ENCODE measurements at regions of chr12 and their contacts with region 1.

Region 1: GRCh38 chr12:57111031-57111734 is at the start of gene STAT6:
- DNase-seq: peak; percentile 92
- ATAC-seq: peak; percentile 60
- H3K4me3 ChIP-seq: peak within 1 kb of the TSS; percentile 87 to 100 (median 100)
- H3K4me3 Mint-ChIP-seq: peak within 1 kb of the TSS; percentile 99
- H3K27ac ChIP-seq: peak within 1 kb of the TSS; percentile 96 to 100
- H3K27ac Mint-ChIP-seq: peak within 1 kb of the TSS; percentile 98
- H3K4me1 ChIP-seq: peaks cover 20 to 40% of the 10 kb centered on the region in 2 donors
- H3K4me1 Mint-ChIP-seq: peaks cover 43% of the 10 kb centered on the region
- H3K27me3 ChIP-seq: no peaks in the 10 kb centered on the region
- H3K27me3 Mint-ChIP-seq: no peaks in the 10 kb centered on the region
- CTCF ChIP-seq: no peak
- total RNA-seq, gene STAT6: 704 and 736 TPM in 2 replicates

Region 2: DNA sequence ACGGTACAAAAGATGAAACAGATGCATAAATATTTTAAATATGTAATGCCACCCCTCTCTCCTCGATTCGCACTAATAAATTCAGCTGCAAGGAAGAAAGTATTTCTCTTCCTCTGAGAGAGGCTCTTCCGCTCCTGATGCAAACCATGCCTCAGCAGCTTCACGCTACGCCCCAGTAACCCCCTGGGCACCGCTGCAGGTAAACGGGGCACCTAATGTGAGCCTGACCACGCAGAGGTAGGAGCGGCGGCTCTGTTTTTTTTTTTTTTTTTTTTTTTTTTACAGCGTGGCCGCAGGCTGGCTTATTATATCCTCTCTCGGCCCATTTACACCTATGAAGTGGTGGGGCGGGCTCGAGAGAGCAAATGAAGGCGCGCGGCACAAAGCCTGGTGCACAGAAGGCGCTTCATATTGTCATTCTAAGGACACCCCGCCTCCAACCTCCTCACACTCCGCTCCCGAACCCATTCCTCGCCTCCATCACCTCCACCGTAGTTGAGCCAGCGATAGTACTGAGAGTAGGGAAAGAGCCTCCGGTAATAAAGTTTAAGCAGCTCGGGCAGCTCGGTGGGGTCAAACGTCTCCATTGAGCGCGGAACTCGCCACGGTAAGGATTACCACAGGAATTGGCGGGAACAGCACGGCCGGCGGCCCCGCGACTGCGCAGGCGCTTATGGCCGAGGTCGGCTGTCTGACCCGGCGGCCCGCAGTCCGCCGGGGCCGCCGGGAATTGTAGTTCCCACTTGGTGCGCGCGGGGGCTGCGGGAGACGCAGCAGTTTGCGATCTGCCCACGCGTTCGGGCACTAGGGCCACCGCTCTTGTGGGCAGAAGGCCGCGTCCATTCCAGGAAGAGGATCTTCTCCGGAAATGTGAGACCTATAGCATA is 359.2 kb before region 1 on chr12 and contains the start of gene PRIM1:
- CTCF ChIA-PET with region 1: interaction called, 38 read pairs
- POLR2A ChIA-PET with region 1: interaction called, 3 read pairs
- intact Hi-C with region 1: loop called (anchors 1 kb)
- DNase-seq: peak; percentile 88
- ATAC-seq: peak; percentile 82
- H3K4me3 ChIP-seq: peak within 1 kb of the TSS; percentile 90 to 100 (median 97)
- H3K4me3 Mint-ChIP-seq: peak within 1 kb of the TSS; percentile 97
- H3K27ac ChIP-seq: peak within 1 kb of the TSS; percentile 79 to 80
- H3K27ac Mint-ChIP-seq: peak within 1 kb of the TSS; percentile 96
- H3K4me1 ChIP-seq: peaks cover 38% of the 10 kb centered on the region in 2 donors
- H3K4me1 Mint-ChIP-seq: peaks cover 44% of the 10 kb centered on the region
- H3K27me3 ChIP-seq: no peaks in the 10 kb centered on the region
- H3K27me3 Mint-ChIP-seq: no peaks in the 10 kb centered on the region
- CTCF ChIP-seq: peak; percentile 21
- total RNA-seq, gene PRIM1: 25.2 and 25.4 TPM in 2 replicates

Region 3: DNA sequence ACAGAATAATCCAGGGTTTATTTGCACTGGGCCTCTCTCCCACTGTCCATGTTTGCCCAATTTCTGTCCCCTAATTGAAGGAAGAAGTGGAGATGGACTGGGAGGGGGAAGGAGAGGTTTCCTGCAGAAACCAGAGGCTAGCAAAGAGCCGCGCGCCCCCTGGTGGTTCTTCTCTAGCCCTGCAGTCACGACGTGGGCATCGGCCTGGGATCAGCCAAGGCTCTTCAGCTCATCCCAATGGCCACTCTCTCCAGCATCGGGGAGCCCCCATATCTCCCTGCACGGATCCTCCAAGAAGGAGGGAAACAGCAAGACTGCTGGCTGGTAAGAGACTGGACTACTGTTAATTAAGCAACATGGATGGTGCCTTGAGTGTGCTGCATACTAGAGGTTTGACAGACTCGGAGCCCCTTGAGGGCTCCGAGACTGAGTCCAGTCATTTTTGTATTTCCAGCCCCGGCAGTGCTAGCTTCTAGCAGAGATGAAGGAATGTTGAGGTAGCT is 123.6 kb before region 1 on chr12:
- CTCF ChIA-PET with region 1: interaction called, 15 read pairs
- POLR2A ChIA-PET with region 1: no interaction called
- intact Hi-C with region 1: no loop called
- DNase-seq: peak; percentile 79
- ATAC-seq: peak; percentile 80
- H3K4me3 ChIP-seq: no peak overlapping the region
- H3K4me3 Mint-ChIP-seq: peak overlapping the region; percentile 52
- H3K27ac ChIP-seq: no peak overlapping the region
- H3K27ac Mint-ChIP-seq: no peak overlapping the region
- H3K4me1 ChIP-seq: peaks cover 0 to 8% of the 10 kb centered on the region in 2 donors
- H3K4me1 Mint-ChIP-seq: peaks cover 4% of the 10 kb centered on the region
- H3K27me3 ChIP-seq: peaks cover 0 to 8% (median 2%) of the 10 kb centered on the region in 4 experiments
- H3K27me3 Mint-ChIP-seq: no peaks in the 10 kb centered on the region
- CTCF ChIP-seq: peak; percentile 97

Region 4: GRCh38 chr12:57031138-57031725 is 80.0 kb before region 1 on chr12:
- CTCF ChIA-PET with region 1: interaction called, 22 read pairs
- POLR2A ChIA-PET with region 1: interaction called, 6 read pairs
- intact Hi-C with region 1: no loop called
- DNase-seq: peak; percentile 63
- ATAC-seq: peak; percentile 68
- H3K4me3 ChIP-seq: no peak overlapping the region
- H3K4me3 Mint-ChIP-seq: no peak overlapping the region
- H3K27ac ChIP-seq: no peak overlapping the region
- H3K27ac Mint-ChIP-seq: peak overlapping the region; percentile 8
- H3K4me1 ChIP-seq: peaks cover 8 to 14% of the 10 kb centered on the region in 2 donors
- H3K4me1 Mint-ChIP-seq: peaks cover 19% of the 10 kb centered on the region
- H3K27me3 ChIP-seq: no peaks in the 10 kb centered on the region
- H3K27me3 Mint-ChIP-seq: no peaks in the 10 kb centered on the region
- CTCF ChIP-seq: peak; percentile 6

Region 5: DNA sequence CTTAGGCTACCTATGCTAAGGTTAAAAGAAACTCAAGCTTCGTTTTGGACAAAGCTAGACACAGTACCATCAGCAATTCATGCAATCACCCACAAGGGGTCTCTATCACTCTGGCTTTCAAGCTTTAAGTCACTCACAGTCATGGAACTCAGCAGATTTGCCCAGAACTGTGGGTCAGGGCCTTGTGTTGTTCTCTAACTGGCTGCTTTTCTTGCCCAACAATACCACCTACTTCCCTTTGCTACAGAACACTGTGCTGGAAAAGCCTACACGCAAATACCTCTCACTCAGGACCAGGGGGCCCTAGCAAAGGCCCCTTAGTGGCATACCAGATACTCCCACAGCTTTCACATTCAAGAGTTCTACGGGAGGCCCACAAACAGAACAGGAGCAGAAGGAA is 41.7 kb before region 1 on chr12:
- CTCF ChIA-PET with region 1: interaction called, 420 read pairs
- POLR2A ChIA-PET with region 1: interaction called, 68 read pairs
- intact Hi-C with region 1: loop called (anchors 1 kb)
- DNase-seq: peak; percentile 85
- ATAC-seq: peak; percentile 100
- H3K4me3 ChIP-seq: no peak overlapping the region
- H3K4me3 Mint-ChIP-seq: no peak overlapping the region
- H3K27ac ChIP-seq: peak overlapping the region; percentile 30 to 53
- H3K27ac Mint-ChIP-seq: peak overlapping the region; percentile 82
- H3K4me1 ChIP-seq: peaks cover 12 to 23% of the 10 kb centered on the region in 2 donors
- H3K4me1 Mint-ChIP-seq: peaks cover 32% of the 10 kb centered on the region
- H3K27me3 ChIP-seq: no peaks in the 10 kb centered on the region
- H3K27me3 Mint-ChIP-seq: no peaks in the 10 kb centered on the region
- CTCF ChIP-seq: peak; percentile 85

Region 6: DNA sequence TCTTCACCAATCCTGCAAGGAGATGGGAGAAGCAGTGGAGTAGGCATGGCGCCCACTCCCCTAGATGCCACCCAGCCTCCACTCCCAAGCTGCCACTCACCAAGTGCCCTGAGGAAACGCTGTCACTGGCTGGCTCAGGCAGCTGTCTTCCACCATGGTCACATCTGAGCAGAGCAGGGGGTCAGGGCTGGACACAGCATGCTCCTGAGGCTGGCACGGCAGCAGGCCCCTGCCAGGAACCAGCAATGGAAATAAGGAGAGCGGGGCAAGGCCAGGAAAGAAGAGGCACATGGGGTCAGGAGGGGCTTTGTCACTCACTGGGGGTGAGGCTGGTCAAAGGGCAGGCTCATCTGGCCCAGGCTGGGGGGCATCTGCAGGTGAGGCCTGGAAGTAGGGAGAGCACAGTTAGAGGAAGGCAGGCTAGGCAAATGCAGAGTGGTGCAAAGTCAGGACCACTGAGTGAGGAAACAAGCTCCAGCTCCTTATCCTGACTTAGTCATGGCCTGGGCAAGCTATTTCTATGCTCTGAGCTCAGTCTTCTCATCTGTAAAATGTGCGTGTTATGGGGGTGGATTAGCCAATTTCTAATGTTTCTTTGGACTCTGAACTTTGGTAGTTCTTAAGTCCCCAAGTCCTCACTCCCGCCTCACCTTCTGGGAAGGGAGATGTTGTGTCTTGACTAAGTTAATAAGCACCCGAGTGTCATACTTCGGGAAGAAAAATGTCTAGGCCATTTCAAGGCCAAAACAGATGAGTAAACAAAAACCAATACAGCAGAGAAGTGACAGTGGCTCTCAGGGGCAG is 14.2 kb before region 1 on chr12:
- CTCF ChIA-PET with region 1: interaction called, 246 read pairs
- POLR2A ChIA-PET with region 1: interaction called, 56 read pairs
- intact Hi-C with region 1: loop called (anchors 1 kb)
- DNase-seq: no peak
- ATAC-seq: no peak
- H3K4me3 ChIP-seq: no peak overlapping the region
- H3K4me3 Mint-ChIP-seq: no peak overlapping the region
- H3K27ac ChIP-seq: peak overlapping the region in 1 of 2 donors; percentile 7
- H3K27ac Mint-ChIP-seq: peak overlapping the region; percentile 59
- H3K4me1 ChIP-seq: peaks cover 19 to 23% of the 10 kb centered on the region in 2 donors
- H3K4me1 Mint-ChIP-seq: peaks cover 48% of the 10 kb centered on the region
- H3K27me3 ChIP-seq: no peaks in the 10 kb centered on the region
- H3K27me3 Mint-ChIP-seq: no peaks in the 10 kb centered on the region
- CTCF ChIP-seq: no peak

Region 7: DNA sequence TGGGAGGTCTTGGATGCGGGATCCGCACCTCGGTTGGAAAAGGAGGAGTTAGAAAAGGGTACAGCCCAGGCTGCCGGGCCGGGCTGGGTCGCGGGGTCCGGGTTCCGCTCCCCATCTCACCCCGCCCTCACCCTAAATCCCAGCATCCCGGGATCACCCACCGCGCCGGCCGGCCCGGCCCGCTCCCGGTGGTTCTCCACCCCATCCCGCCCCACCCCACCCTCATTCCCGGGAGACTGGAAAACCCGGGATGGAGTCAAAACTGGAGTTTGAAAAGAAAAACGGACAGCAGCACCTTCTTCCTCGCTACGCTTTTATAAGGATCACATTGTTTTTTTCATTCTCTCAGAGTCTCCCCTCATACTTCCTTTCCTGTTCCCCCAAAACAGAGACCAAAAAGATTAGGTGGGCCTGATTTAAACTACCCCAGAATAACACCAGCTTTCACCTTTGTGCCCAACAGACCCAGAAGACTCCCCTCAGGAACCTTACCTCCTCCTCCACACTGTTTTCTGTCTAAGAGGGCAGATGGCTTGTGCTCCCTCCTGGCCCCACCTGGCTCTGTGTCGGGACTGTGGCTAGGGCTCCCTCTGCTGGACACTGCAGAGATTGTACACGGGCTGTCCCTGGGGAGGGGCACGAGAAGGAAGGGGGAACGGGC is 351.2 kb after region 1 on chr12:
- CTCF ChIA-PET with region 1: no interaction called
- POLR2A ChIA-PET with region 1: no interaction called
- intact Hi-C with region 1: loop called (anchors 5 kb)
- DNase-seq: peak; percentile 96
- ATAC-seq: peak; percentile 64
- H3K4me3 ChIP-seq: peak overlapping the region; percentile 58 to 93 (median 81)
- H3K4me3 Mint-ChIP-seq: peak overlapping the region; percentile 92
- H3K27ac ChIP-seq: peak overlapping the region; percentile 15 to 58
- H3K27ac Mint-ChIP-seq: peak overlapping the region; percentile 93
- H3K4me1 ChIP-seq: peaks cover 23 to 48% of the 10 kb centered on the region in 2 donors
- H3K4me1 Mint-ChIP-seq: peaks cover 40% of the 10 kb centered on the region
- H3K27me3 ChIP-seq: no peaks in the 10 kb centered on the region
- H3K27me3 Mint-ChIP-seq: no peaks in the 10 kb centered on the region
- CTCF ChIP-seq: peak; percentile 88